Ascending aorta (tissue), 2 donors: ENCODE measurements at regions of chr12 and their contacts with region 1.

Region 1: DNA sequence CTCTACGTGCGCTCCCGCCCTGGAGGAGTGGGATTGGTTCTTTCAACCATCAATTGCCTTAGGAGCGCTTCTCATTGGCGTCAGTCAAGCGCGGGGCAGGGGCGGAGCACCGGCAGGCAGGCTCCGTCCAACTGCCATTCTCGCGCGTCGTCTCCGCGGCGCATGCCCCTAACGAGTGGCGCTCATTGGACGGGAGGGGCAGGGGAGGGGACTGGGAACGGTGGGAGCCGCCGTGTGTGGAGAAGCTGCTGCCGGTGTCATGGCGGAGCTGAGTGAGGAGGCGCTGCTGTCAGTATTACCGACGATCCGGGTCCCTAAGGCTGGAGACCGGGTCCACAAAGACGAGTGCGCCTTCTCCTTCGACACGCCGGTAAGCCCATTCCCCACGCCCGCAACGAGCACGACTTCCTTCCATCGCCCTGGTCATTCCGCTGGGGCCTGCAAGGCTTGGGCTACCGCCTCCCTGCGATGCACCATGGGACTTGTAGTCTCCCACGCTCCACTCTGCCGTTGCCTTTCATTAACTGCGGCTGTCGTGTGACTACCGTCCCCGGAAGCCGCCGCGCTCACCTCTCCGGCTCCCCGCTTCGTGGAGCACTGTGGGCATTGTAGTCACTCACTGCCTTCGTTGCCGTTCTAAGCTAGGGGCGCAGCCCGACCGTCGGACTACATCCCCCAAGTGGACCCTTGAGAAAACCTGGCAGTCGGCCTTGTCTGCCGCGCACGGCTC is at the start of gene USP5:
- DNase-seq: peak; percentile 99 to 100
- H3K4me3 ChIP-seq: peak within 1 kb of the TSS; percentile 65 to 79
- H3K27ac ChIP-seq: peak within 1 kb of the TSS; percentile 90 to 94
- H3K4me1 ChIP-seq: peaks cover 4 to 18% of the 10 kb centered on the region in 2 donors
- H3K27me3 ChIP-seq: no peaks in the 10 kb centered on the region
- CTCF ChIP-seq: no peak
- total RNA-seq, gene USP5: 46.2 TPM

Region 2: DNA sequence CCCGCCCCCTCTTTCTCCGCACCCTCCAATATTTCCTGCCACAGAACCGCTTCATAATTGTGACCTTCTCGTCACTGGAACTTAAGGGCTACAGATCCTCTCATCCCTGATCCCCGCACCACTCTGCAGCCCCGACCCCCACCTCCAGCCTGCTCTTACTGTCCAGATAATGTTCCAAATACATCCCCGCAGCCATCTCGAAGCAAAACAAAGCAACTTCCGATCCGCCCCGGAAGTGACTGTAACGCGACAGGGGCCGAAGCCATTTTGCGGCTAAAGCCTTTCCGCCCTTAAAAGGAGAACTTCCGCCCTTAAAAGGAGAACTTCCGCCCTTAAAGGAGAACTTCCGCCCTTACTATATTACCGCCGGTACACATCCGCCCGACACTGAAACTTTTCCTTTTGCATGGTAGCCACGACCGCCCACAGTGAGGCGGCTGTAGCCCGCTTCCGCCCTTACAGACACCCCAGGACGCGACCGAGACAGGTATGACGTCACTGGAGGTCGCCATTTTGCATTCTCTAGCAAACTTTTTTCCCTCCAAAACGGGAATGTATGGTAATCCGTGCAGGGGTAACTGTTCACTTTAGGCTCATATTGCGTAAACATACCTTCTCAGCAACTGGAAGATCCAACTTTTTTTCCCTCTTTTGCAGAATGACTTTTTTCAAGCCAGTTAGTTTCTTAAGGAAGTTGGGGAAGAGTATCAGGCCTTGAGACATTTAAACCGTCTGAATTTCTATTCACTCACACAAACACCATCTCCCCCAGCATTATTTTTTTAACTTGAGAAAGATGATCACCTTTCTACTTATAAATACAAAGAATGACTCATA is 189.0 kb before region 1 on chr12 and contains the start of gene ING4:
- intact Hi-C with region 1: loop called (anchors 1 kb)
- DNase-seq: peak; percentile 96 to 99
- H3K4me3 ChIP-seq: peak within 1 kb of the TSS; percentile 75 to 82
- H3K27ac ChIP-seq: peak within 1 kb of the TSS; percentile 77 to 80
- H3K4me1 ChIP-seq: peaks cover 4 to 12% of the 10 kb centered on the region in 2 donors
- H3K27me3 ChIP-seq: no peaks in the 10 kb centered on the region
- CTCF ChIP-seq: no peak
- total RNA-seq, gene ING4: 2.6 TPM

Region 3: GRCh38 chr12:6764011-6764828 is 87.9 kb before region 1 on chr12:
- intact Hi-C with region 1: loop called (anchors 1 kb)
- DNase-seq: peak; percentile 85 to 96
- H3K4me3 ChIP-seq: peak overlapping the region; percentile 96 to 97
- H3K27ac ChIP-seq: peak overlapping the region; percentile 84 to 97
- H3K4me1 ChIP-seq: peaks cover 10 to 29% of the 10 kb centered on the region in 2 donors
- H3K27me3 ChIP-seq: no peaks in the 10 kb centered on the region
- CTCF ChIP-seq: no peak

Region 4: DNA sequence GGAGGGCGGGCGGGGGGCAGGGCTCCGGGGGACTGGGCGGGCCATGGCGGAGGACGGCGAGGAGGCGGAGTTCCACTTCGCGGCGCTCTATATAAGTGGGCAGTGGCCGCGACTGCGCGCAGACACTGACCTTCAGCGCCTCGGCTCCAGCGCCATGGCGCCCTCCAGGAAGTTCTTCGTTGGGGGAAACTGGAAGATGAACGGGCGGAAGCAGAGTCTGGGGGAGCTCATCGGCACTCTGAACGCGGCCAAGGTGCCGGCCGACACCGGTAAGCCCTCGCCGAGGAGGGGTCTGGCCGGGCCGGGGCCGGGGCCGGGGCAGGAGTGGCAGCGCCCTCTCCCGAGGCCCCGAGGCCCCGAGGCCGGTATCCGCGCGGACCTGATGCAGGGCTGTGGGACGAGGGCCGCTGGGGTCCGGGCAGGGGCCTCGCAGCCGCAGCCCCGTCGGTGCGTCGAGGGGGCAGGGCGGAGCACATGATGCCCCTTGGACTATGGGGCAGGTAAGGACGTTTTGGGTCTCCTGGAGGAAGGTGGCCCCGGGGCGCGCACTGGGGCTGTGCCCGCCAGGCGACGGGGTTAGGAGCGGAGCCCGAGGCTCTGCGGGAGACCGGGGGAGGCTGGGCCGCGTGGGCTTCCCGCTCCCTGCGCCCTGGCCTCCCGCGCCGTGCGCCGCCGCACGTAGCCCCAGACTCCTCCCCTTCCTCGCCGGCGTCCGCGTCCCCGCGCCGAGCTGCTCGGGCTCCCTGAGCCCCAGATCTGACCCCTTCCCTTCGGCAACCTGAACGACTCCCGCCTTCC is 15.5 kb after region 1 on chr12 and contains the start of gene TPI1:
- intact Hi-C with region 1: loop called (anchors 2 kb)
- DNase-seq: no peak
- H3K4me3 ChIP-seq: peak within 1 kb of the TSS; percentile 91 to 94
- H3K27ac ChIP-seq: peak within 1 kb of the TSS; percentile 99
- H3K4me1 ChIP-seq: peaks cover 14 to 40% of the 10 kb centered on the region in 2 donors
- H3K27me3 ChIP-seq: no peaks in the 10 kb centered on the region
- CTCF ChIP-seq: peak in 2 of 3 experiments; percentile 3 to 11
- total RNA-seq, gene TPI1: 482 TPM

Region 5: DNA sequence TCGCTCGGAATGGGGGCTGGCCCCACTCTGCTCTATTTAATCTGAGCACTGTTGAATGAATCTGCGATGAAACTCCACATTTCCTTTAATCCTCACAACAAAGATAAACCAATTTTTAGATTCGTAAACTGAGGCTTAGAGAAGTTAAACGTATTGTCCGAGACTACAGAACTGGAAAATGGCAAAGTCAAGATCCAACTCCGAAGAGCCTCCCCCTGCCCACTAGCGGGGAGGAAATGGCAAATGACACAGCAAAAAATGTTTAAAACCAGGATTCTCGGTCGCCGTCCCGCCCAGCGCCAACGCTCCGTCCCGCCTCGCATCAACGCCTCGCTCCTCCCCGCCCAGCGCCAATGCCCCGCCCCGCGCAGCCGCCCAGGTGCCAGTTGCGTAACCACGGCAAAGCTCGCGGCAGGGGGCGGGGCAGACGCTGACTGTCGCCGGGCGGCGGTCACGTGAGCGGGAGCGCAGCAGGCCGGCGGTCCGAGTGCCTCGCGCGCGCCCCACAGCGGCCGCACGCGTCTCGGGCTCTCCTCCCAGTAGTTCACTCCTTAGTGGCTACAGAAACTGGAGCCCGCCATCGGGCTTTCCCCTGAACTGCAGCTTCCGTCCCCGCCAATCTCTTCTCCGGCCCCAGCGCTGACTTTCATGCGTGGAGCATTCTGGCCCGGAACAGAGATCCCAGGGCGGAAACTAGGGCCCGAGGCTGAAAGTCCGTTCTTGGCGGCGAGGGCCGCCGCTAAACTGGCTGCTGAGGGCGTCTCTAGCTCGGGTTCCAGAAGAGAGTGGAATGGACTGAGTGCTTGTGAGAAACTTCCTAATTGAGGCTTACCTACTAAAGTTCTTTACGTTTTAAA is 38.9 kb after region 1 on chr12:
- intact Hi-C with region 1: loop called (anchors 1 kb)
- DNase-seq: peak; percentile 88 to 98
- H3K4me3 ChIP-seq: peak overlapping the region; percentile 54 to 72
- H3K27ac ChIP-seq: peak overlapping the region; percentile 92 to 93
- H3K4me1 ChIP-seq: peaks cover 0 to 6% of the 10 kb centered on the region in 2 donors
- H3K27me3 ChIP-seq: no peaks in the 10 kb centered on the region
- CTCF ChIP-seq: peak; percentile 82 to 94 (median 83)

Region 6: GRCh38 chr12:7068240-7068993 is 216.3 kb after region 1 on chr12:
- intact Hi-C with region 1: no loop called
- DNase-seq: no peak
- H3K4me3 ChIP-seq: no peak overlapping the region
- H3K27ac ChIP-seq: peak overlapping the region in 1 of 2 donors; percentile 45
- H3K4me1 ChIP-seq: no peaks in the 10 kb centered on the region
- H3K27me3 ChIP-seq: no peaks in the 10 kb centered on the region
- CTCF ChIP-seq: no peak